CD8-positive, alpha-beta T cell (primary cell): ENCODE measurements at regions of chr1 and their contacts with region 1.

Region 1: GRCh38 chr1:223123011-223123610 is 19.9 kb downstream of the TLR5 start:
- DNase-seq: no peak
- ATAC-seq: no peak
- H3K4me3 ChIP-seq: peak overlapping the region; percentile 13 to 29
- H3K4me3 Mint-ChIP-seq: peak overlapping the region; percentile 63
- H3K27ac ChIP-seq: no peak overlapping the region
- H3K27ac Mint-ChIP-seq: no peak overlapping the region
- H3K4me1 ChIP-seq: no peaks in the 10 kb centered on the region
- H3K4me1 Mint-ChIP-seq: peaks cover 6% of the 10 kb centered on the region
- H3K27me3 ChIP-seq: no peaks in the 10 kb centered on the region
- H3K27me3 Mint-ChIP-seq: no peaks in the 10 kb centered on the region
- CTCF ChIP-seq: no peak

Region 2: GRCh38 chr1:222736972-222737371 is 386.1 kb before region 1 on chr1 and contains the start of gene FAM177B:
- CTCF ChIA-PET with region 1: interaction called, 10 read pairs
- POLR2A ChIA-PET with region 1: no interaction called
- intact Hi-C with region 1: no loop called
- DNase-seq: no peak
- ATAC-seq: no peak
- H3K4me3 ChIP-seq: no peak within 1 kb of the TSS
- H3K4me3 Mint-ChIP-seq: no peak within 1 kb of the TSS
- H3K27ac ChIP-seq: no peak within 1 kb of the TSS
- H3K27ac Mint-ChIP-seq: no peak within 1 kb of the TSS
- H3K4me1 ChIP-seq: no peaks in the 10 kb centered on the region
- H3K4me1 Mint-ChIP-seq: no peaks in the 10 kb centered on the region
- H3K27me3 ChIP-seq: no peaks in the 10 kb centered on the region
- H3K27me3 Mint-ChIP-seq: no peaks in the 10 kb centered on the region
- CTCF ChIP-seq: no peak
- total RNA-seq, gene FAM177B: not detected

Region 3: DNA sequence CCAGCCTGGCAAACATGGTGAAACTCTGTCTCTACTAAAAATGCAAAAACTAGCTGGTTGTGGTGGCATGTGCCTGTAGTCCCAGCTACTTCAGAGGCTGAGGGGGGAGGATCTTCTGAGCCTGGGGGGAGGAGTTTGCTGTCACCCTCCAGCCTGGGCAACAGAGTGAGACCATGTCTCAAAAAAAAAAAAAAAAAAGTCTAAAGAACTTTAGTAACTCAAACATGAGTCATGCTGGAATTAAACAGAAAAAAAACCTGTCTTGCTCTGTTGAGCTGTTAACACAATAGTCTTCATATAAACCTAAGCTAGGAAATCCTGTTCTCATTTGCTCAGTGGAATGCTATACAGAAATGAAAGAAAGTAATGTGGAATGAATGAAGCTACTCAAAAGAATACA is 325.0 kb before region 1 on chr1:
- CTCF ChIA-PET with region 1: interaction called, 24 read pairs
- POLR2A ChIA-PET with region 1: no interaction called
- intact Hi-C with region 1: loop called in 1 of 2 experiments (anchors 2 kb)
- DNase-seq: no peak
- ATAC-seq: no peak
- H3K4me3 ChIP-seq: no peak overlapping the region
- H3K4me3 Mint-ChIP-seq: no peak overlapping the region
- H3K27ac ChIP-seq: no peak overlapping the region
- H3K27ac Mint-ChIP-seq: no peak overlapping the region
- H3K4me1 ChIP-seq: no peaks in the 10 kb centered on the region
- H3K4me1 Mint-ChIP-seq: peaks cover 3% of the 10 kb centered on the region
- H3K27me3 ChIP-seq: no peaks in the 10 kb centered on the region
- H3K27me3 Mint-ChIP-seq: peaks cover 3% of the 10 kb centered on the region
- CTCF ChIP-seq: no peak

Region 4: DNA sequence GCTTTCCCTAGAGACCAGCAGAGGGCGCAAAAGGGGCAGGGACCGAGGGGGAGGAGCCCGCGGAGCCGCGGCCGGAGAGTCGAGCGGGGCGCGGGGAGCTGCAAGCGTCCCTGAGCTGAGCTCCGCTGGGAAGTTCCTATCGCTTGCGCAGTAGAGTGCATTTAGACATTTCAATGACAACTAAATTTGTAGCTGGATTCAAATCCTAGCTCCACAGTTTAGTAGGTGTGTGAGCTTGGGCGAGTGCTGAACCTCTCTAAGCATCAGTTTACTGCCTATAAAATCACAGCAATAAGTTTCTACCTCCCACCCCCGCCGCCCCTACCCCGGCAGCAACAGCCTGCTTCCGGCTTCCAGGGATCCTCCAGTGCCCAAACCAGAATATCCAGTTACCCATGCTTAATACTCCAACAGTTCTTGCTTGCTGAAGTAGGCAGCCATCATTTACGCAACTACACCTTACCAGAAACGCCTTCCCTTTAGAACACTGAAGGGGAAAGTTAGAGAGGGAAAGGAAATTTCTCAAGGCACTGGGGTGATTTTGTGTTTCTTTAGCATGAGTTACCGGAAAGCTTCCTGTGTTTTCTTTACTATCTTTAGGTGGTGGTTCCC is 10.8 kb after region 1 on chr1:
- CTCF ChIA-PET with region 1: interaction called, 60 read pairs
- POLR2A ChIA-PET with region 1: interaction called, 4 read pairs
- intact Hi-C with region 1: no loop called
- DNase-seq: peak; percentile 46 to 87 (median 79)
- ATAC-seq: peak; percentile 97
- H3K4me3 ChIP-seq: peak overlapping the region; percentile 22 to 28
- H3K4me3 Mint-ChIP-seq: peak overlapping the region; percentile 69
- H3K27ac ChIP-seq: no peak overlapping the region
- H3K27ac Mint-ChIP-seq: no peak overlapping the region
- H3K4me1 ChIP-seq: peaks cover 7% of the 10 kb centered on the region
- H3K4me1 Mint-ChIP-seq: peaks cover 15% of the 10 kb centered on the region
- H3K27me3 ChIP-seq: peaks cover 0 to 3% of the 10 kb centered on the region in 2 experiments
- H3K27me3 Mint-ChIP-seq: peaks cover 7% of the 10 kb centered on the region
- CTCF ChIP-seq: peak; percentile 85

Region 5: DNA sequence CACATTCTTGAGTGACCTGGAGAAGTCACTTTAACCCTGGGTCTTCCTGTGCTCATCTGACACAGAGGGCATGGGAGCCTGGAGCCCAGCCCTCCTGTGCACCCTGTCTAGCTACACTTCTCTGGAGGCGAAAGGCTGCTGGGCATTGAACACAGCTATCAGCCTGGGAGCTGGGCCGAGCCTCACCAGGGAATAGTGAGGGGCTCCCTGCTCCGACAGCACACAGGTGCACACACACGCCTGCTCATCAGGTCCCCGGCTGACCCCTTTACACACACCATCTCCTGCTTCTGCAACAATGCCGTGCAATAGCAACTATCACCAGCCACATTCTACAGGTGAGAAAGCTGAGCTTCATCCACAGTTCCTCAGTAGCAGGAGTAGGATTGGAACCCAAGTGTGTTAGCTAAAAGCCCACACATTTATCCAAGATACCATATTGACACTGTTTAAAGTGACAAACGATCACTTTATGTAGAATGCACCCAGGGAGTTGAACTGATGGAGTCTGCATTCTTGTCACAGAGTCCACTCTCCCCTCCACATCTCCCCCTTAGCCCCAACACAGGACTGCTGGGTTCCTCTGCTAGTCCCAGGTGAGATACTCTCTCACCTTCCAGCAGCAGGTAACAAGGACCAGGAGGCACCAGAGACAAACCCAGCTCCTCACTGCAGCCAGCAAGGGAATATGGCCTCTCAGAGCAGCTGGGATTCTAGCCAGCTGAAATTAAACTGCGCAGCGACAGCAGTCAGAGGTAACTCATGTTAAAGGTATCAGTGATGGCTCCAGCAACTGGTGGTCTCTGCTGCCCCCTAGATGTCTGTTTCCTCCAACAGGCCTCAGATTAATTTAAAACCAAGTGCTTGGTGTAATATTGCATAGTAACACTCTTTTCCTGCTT is 560.7 kb after region 1 on chr1:
- CTCF ChIA-PET with region 1: interaction called, 19 read pairs
- POLR2A ChIA-PET with region 1: no interaction called
- intact Hi-C with region 1: no loop called
- DNase-seq: peak; percentile 44 to 75 (median 67)
- ATAC-seq: peak; percentile 51
- H3K4me3 ChIP-seq: no peak overlapping the region
- H3K4me3 Mint-ChIP-seq: no peak overlapping the region
- H3K27ac ChIP-seq: no peak overlapping the region
- H3K27ac Mint-ChIP-seq: no peak overlapping the region
- H3K4me1 ChIP-seq: no peaks in the 10 kb centered on the region
- H3K4me1 Mint-ChIP-seq: peaks cover 3% of the 10 kb centered on the region
- H3K27me3 ChIP-seq: no peaks in the 10 kb centered on the region
- H3K27me3 Mint-ChIP-seq: peaks cover 13% of the 10 kb centered on the region
- CTCF ChIP-seq: peak; percentile 69